Activated CD4-positive, alpha-beta memory T cell treated with anti-CD3 and anti-CD28 coated beads for 36 hours (primary cell): ENCODE measurements at regions of chr5 and their contacts with region 1.

Region 1: GRCh38 chr5:80255732-80256479 is at the start of gene SERINC5:
- DNase-seq: peak; percentile 90
- H3K4me3 Mint-ChIP-seq: peak within 1 kb of the TSS; percentile 96
- H3K27ac Mint-ChIP-seq: peak within 1 kb of the TSS; percentile 98
- H3K4me1 Mint-ChIP-seq: peaks cover 46% of the 10 kb centered on the region
- H3K27me3 Mint-ChIP-seq: no peaks in the 10 kb centered on the region
- total RNA-seq, gene SERINC5: 42.8 to 48.0 TPM

Region 2: DNA sequence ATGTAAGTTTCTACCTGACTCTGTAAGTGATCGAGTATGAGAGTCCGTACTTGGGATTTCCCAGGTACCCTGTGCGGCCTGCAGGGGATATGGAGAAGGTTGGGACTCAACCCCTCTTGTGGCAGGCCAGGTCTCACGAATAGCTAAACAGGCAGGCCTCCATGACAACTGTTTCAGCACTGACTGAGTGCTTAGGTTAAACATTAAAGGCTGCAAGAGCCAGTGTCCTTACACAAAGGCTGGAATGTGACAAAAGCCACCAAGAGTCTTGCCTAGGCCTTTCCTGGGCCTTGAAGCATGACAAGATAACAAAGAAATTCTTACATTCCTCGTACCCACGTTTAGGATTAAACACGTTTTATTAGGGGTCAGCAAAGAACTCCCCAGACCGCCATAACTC is 162.1 kb before region 1 on chr5:
- CTCF ChIA-PET with region 1: interaction called, 34 read pairs
- POLR2A ChIA-PET with region 1: interaction called, 6 read pairs
- intact Hi-C with region 1: no loop called
- DNase-seq: no peak
- H3K4me3 Mint-ChIP-seq: no peak overlapping the region
- H3K27ac Mint-ChIP-seq: no peak overlapping the region
- H3K4me1 Mint-ChIP-seq: peaks cover 22% of the 10 kb centered on the region
- H3K27me3 Mint-ChIP-seq: no peaks in the 10 kb centered on the region

Region 3: GRCh38 chr5:80141147-80141671 is 114.7 kb before region 1 on chr5:
- CTCF ChIA-PET with region 1: interaction called, 6 read pairs
- POLR2A ChIA-PET with region 1: interaction called, 33 read pairs
- intact Hi-C with region 1: no loop called
- DNase-seq: no peak
- H3K4me3 Mint-ChIP-seq: peak overlapping the region; percentile 40
- H3K27ac Mint-ChIP-seq: peak overlapping the region; percentile 87
- H3K4me1 Mint-ChIP-seq: peaks cover 77% of the 10 kb centered on the region
- H3K27me3 Mint-ChIP-seq: no peaks in the 10 kb centered on the region

Region 4: DNA sequence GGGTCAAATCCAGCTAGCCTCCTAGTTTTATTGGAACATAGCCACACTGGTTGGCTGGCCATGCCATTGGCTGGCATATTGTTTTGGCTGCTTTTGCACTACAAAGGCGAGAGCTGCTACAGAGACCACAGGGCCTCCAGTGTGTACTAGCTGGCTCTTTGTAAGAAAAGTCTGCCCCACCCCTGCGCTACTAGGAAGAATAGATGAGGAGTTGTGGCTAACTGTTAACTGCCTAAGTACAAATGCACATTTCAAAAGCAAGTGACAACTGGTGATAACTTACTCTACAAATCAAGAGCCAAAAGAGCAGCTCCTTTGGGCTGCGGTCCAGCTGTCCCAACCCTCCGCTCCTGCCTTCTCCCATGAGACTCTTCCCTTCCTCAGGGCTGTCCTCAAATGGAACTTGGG is 63.9 kb before region 1 on chr5:
- CTCF ChIA-PET with region 1: interaction called, 3 read pairs
- POLR2A ChIA-PET with region 1: interaction called, 70 read pairs
- intact Hi-C with region 1: loop called (anchors 1 kb)
- DNase-seq: peak; percentile 63
- H3K4me3 Mint-ChIP-seq: peak overlapping the region; percentile 61
- H3K27ac Mint-ChIP-seq: peak overlapping the region; percentile 92
- H3K4me1 Mint-ChIP-seq: peaks cover 78% of the 10 kb centered on the region
- H3K27me3 Mint-ChIP-seq: no peaks in the 10 kb centered on the region

Region 5: DNA sequence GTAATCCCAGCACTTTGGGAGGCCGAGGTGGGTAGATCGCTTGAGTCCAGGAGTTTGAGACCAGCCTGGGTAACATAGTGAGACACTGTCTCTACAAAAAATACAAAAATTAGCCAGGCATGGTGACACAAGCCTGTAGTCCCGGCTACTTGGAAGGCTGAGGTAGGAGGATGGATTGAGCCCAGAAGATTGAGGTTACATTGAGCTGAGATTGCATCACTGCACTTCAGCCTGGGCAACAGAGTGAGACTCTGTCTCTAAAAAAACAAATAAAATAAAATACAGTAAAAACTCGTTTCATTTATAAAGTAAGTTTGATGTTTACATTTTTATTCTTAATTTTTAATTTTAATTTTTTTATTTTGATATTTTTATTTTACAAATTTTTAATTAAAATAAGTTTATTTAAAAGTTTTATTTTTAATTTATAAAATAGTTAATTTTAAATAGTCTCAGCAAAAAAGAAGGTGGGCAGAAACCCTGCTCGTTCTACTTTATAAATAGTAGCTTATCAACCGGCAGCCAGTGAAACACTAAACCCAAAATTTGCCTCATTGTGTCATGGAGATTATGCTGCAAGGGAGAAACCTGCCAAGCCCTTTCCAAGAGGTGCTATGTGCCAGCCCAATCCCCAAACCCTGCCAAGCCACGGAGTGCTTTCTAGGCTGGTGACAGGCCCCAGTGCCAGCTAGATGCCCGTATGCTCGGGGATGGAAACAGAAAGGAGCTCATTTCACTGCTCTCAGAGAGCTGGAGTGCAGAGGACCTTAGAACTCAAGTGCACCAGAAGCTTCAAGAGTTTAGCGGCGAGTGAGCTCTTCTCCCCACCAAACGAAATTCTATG is 38.9 kb before region 1 on chr5:
- CTCF ChIA-PET with region 1: interaction called, 5 read pairs
- POLR2A ChIA-PET with region 1: interaction called, 16 read pairs
- intact Hi-C with region 1: loop called (anchors 2 kb)
- DNase-seq: peak; percentile 64
- H3K4me3 Mint-ChIP-seq: peak overlapping the region; percentile 73
- H3K27ac Mint-ChIP-seq: peak overlapping the region; percentile 91
- H3K4me1 Mint-ChIP-seq: peaks cover 85% of the 10 kb centered on the region
- H3K27me3 Mint-ChIP-seq: no peaks in the 10 kb centered on the region

Region 6: DNA sequence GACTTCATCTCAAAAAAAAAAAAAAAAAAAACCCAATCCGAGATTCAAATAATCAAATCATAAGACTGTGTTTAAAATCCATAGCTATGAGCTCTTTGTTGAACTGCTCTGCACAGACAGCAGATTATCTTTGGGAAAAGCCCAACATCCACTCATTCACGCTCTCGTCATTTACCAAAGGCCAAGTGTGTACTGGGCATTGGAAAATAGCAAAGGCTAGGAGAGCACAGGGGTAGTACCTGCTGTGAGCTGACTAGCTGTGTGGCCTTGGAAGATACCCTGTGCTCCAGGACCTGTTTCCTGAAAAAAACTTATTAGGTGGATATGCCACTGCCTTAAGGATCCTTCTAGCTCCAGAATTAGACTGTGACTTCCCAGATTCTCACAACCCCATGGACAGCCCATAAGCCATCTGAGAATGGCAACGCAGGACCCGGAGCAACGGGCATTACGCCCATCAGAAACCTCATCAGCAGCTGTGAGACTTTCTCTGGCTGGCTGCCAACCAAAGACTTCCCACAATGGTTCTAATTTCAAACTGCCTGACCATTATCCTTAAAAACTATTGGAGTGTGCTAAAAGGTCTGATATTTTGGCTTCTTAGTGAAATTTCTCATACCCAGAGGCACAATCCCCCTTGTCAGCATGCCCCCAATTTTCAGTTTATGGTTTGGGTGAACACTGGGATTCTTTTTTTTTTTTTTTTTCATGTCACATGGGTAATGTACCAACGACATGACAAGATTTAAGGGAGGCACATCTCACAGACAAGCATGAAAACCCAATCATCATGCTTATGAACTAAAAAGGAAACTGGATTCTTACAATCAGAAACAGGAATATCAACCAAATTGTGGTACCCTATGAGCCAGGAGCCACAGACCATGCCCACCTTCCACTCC is 16.9 kb before region 1 on chr5:
- CTCF ChIA-PET with region 1: interaction called, 8 read pairs
- POLR2A ChIA-PET with region 1: interaction called, 21 read pairs
- intact Hi-C with region 1: loop called (anchors 2 kb)
- DNase-seq: peak; percentile 7
- H3K4me3 Mint-ChIP-seq: peak overlapping the region; percentile 33
- H3K27ac Mint-ChIP-seq: peak overlapping the region; percentile 75
- H3K4me1 Mint-ChIP-seq: peaks cover 76% of the 10 kb centered on the region
- H3K27me3 Mint-ChIP-seq: no peaks in the 10 kb centered on the region

Region 7: GRCh38 chr5:80407735-80408482 is 152.0 kb after region 1 on chr5 and contains the start of gene ZFYVE16:
- CTCF ChIA-PET with region 1: no interaction called
- POLR2A ChIA-PET with region 1: no interaction called
- intact Hi-C with region 1: loop called (anchors 5 kb)
- DNase-seq: peak; percentile 98
- H3K4me3 Mint-ChIP-seq: peak within 1 kb of the TSS; percentile 92
- H3K27ac Mint-ChIP-seq: peak within 1 kb of the TSS; percentile 97
- H3K4me1 Mint-ChIP-seq: peaks cover 16% of the 10 kb centered on the region
- H3K27me3 Mint-ChIP-seq: no peaks in the 10 kb centered on the region
- total RNA-seq, gene ZFYVE16: 12.1 to 15.7 TPM